Posterior cingulate gyrus (tissue), 11 donors: ENCODE measurements at regions of chr3 and their contacts with region 1.

Region 1: GRCh38 chr3:36957862-36958686 is 13.2 kb upstream of the TRANK1 start:
- DNase-seq: no peak

Region 2: DNA sequence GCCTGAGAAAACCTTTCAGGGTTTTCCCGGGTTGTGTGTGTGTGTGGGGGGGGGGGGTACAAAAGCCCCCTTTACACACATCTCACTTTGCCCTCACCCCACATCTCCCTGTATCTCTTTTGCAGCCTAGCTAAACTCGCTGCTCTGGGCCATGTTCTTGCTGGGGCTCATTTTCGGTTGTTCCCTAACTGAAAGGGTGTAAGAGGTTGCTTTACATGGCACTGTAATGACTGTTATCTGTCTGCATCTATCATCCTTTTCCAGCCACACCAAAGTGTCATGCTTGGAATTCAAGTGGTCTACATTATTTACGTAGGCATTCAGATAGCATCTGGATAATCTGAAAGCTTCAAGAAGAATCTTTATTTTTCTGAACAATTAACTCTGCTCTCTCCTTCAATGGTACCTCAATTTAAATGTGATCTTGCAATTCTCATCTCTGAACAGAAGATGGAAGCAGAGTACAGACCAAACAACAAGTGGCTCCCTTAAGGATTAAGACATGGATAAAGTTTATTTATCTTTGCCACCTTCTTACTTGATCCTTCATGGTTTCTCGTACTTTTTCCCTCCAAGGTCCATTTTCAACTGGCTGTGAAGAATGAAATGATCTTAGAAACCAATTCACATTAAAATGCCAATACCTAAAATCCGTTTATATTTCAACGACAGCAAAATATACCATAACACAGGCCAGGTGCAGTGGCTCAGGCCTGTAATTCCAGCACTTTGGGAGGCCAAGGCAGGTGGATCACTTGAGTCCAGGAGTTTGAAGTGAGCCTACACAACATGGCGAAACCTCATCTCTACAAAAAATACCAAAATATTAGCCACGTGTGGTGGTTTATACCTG is 228.6 kb before region 1 on chr3:
- intact Hi-C with region 1: loop called (anchors 2 kb)
- DNase-seq: no peak

Region 3: DNA sequence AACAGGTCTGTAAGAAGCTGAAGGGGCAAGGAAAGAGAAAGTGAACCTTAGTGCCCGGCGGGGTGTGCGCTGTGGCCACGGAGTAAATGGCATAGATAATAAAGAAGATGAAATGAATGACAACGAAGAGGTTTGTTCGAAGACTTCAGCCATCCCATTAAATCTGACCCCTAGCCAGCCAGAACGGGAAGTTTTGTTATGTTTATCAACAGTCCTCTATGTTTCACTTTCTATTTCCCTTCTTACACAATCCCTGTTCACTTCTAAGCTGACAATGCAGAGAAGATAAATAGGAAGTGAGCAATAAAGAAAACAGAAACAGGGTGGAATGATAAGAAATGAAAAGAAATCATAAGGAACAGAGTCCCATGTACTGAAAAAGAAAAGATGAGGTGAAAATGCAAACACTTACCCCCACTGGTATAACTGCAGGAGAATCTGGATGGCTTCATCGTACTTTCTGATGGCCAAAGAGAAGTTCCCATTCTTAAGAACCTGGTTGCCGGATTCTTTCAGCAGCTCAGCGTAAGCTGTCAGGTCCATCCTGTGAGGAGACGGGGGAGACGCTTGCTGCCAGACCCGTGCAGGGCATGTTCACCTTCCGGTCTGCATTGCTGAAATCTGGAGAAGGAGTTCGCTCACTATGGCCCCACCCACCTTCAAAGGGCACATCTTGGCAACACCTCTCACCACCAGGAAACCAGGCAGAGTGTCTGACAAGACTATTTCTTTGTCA is 50.0 kb before region 1 on chr3:
- intact Hi-C with region 1: loop called (anchors 5 kb)
- DNase-seq: no peak

Region 4: GRCh38 chr3:37024092-37024491 is 66.0 kb after region 1 on chr3:
- intact Hi-C with region 1: no loop called
- DNase-seq: no peak